Pancreas (tissue), 10 donors: ENCODE measurements at regions of chr3 and their contacts with region 1.

Region 1: GRCh38 chr3:141360888-141361598 is 7.3 kb upstream of the ZBTB38 start:
- DNase-seq: peak in 1 of 6 donors; percentile 9
- ATAC-seq: peak; percentile 84 to 97 (median 94)
- H3K4me3 ChIP-seq: no peak overlapping the region
- H3K27ac ChIP-seq: peak overlapping the region in 1 of 4 donors; percentile 32
- H3K4me1 ChIP-seq: peaks cover 4 to 6% (median 4%) of the 10 kb centered on the region in 3 donors
- H3K27me3 ChIP-seq: no peaks in the 10 kb centered on the region
- CTCF ChIP-seq: peak; percentile 33 to 72 (median 48)

Region 2: GRCh38 chr3:141392897-141393734 is 32.1 kb after region 1 on chr3:
- intact Hi-C with region 1: no loop called
- DNase-seq: no peak
- ATAC-seq: peak in 1 of 4 donors; percentile 41
- H3K4me3 ChIP-seq: no peak overlapping the region
- H3K27ac ChIP-seq: no peak overlapping the region
- H3K4me1 ChIP-seq: peaks cover 5 to 16% (median 5%) of the 10 kb centered on the region in 3 donors
- H3K27me3 ChIP-seq: no peaks in the 10 kb centered on the region
- CTCF ChIP-seq: no peak

Region 3: DNA sequence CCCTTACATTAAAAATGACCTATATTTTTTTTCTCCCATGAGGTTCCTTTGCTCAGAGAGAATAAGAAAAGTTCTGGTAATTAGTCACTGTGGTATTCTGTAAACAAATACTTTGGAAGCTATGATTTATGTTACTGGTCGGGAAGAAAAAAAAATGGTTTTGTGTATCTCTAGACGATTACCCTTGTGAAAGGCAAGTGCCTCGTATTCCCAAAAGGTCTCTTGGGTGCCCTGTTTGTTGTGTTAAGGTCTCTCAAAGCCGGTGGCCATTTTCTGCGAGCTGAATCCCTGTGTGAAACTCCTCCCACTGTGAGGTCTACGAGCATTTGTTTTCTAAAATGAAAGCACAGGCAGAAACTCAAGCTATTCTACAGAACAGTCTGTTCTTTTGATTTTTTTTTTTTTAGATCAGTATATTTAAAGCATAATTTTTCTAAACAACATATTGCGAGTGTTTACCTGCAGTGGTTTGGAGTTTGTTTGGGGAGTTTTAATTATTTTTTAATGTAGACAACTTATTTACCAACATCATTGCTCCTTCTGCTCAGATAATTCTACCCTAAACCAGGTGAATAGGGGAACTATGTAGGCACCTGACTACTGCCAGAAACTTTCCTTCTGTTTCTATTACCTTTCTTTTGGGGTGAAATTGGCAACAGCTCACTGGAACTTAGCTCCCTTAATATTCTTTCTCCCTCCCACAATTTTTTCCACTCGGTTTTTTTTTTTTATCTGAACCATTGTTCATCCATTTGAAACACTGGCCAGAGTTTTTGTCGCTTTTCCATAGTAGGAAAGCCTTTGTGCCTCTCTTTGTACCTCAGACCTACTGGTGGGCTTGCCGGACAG is 51.3 kb after region 1 on chr3:
- intact Hi-C with region 1: loop called in 1 of 3 experiments (anchors 10 kb)
- DNase-seq: peak in 3 of 6 donors; percentile 54 to 71 (median 56)
- ATAC-seq: peak; percentile 63 to 80 (median 72)
- H3K4me3 ChIP-seq: peak overlapping the region in 3 of 4 donors; percentile 4 to 31 (median 22)
- H3K27ac ChIP-seq: peak overlapping the region; percentile 70 to 92 (median 88)
- H3K4me1 ChIP-seq: peaks cover 53 to 61% (median 54%) of the 10 kb centered on the region in 3 donors
- H3K27me3 ChIP-seq: no peaks in the 10 kb centered on the region
- CTCF ChIP-seq: no peak

Region 4: GRCh38 chr3:141441381-141442364 is 80.6 kb after region 1 on chr3:
- intact Hi-C with region 1: loop called in 1 of 3 experiments (anchors 10 kb)
- DNase-seq: peak; percentile 60 to 88 (median 72)
- ATAC-seq: peak; percentile 93 to 97 (median 96)
- H3K4me3 ChIP-seq: no peak overlapping the region
- H3K27ac ChIP-seq: peak overlapping the region in 2 of 4 donors; percentile 40 to 67
- H3K4me1 ChIP-seq: peaks cover 0 to 15% (median 14%) of the 10 kb centered on the region in 3 donors
- H3K27me3 ChIP-seq: no peaks in the 10 kb centered on the region
- CTCF ChIP-seq: peak; percentile 80 to 94 (median 88)